Ovary (tissue), 10 donors: ENCODE measurements at regions of chr11 and their contacts with region 1.

Region 1: DNA sequence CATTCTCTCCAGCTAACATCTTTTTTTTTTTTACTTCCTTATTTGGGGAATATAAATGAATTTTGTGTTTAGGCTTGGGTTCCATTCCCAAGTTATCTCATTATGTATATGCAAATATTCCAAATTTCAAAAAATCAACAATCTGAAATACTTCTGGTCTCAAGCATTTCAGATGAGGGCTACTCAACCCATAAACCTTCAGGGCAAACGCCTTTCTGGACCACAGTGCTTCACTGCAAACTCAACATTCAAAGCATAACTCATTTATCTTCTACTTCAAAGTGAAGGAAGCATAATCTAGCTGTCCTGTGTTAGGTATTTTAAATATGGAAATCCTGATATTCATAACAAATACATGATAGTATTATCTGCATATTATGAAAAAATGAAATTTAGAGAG is 161.7 kb upstream of the PGR start:
- DNase-seq: no peak
- H3K4me3 ChIP-seq: no peak overlapping the region
- H3K27ac ChIP-seq: no peak overlapping the region
- H3K4me1 ChIP-seq: no peaks in the 10 kb centered on the region
- H3K27me3 ChIP-seq: no peaks in the 10 kb centered on the region
- CTCF ChIP-seq: no peak
- EP300 ChIP-seq: no peak
- POLR2A ChIP-seq: no peak

Region 2: GRCh38 chr11:101305496-101305895 is 14.2 kb after region 1 on chr11:
- intact Hi-C with region 1: loop called in 1 of 4 experiments (anchors 2 kb)
- DNase-seq: no peak
- H3K4me3 ChIP-seq: no peak overlapping the region
- H3K27ac ChIP-seq: no peak overlapping the region
- H3K4me1 ChIP-seq: peaks cover 3% of the 10 kb centered on the region
- H3K27me3 ChIP-seq: no peaks in the 10 kb centered on the region
- CTCF ChIP-seq: no peak
- EP300 ChIP-seq: no peak
- POLR2A ChIP-seq: no peak